Calu3 (cell line): ENCODE measurements at regions of chr11 and their contacts with region 1.

Region 1: DNA sequence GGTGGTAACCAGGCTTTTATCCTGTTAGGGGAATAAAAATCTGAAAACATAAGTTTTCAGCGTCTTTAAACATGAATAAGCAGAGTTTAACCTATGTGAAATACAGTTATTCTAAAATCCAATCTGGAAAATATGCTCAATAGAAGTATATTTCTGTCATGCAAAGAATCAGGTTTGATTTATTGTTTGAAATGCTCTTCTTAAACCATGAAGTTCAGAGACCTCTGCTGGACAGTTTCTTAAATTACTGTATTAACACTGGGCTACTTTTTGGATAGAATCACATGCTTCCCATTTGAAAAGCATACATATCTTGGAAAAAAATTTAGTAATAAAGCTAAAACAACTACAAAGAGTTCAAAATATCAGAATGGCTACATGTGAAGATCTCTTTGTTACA is 25.4 kb downstream of the APIP start:
- DNase-seq: no peak
- H3K4me3 Mint-ChIP-seq: no peak overlapping the region
- H3K27ac Mint-ChIP-seq: no peak overlapping the region
- H3K4me1 Mint-ChIP-seq: peaks cover 20% of the 10 kb centered on the region
- H3K27me3 Mint-ChIP-seq: no peaks in the 10 kb centered on the region
- CTCF ChIP-seq: no peak

Region 2: DNA sequence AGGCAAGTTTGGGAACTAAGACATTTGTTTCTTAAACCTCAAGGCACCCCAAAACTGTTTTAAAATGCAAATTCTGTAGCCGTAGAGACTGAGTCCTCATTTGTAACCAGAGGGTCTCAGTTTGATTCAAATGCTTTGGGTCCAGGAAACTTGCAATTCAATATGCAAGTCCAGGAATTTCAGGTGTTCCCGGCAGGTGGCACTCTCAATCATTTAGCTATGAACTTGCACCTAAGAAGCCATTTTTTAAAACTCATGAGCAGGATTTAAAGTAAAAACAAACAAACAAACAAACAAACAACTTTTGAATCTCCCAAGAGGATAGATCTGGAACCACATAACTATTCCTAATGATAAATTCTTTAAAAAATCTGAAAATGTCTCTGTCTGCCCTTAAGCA is 524.3 kb before region 1 on chr11:
- CTCF ChIA-PET with region 1: no interaction called
- intact Hi-C with region 1: loop called (anchors 10 kb)
- DNase-seq: peak; percentile 62
- H3K4me3 Mint-ChIP-seq: no peak overlapping the region
- H3K27ac Mint-ChIP-seq: no peak overlapping the region
- H3K4me1 Mint-ChIP-seq: peaks cover 8% of the 10 kb centered on the region
- H3K27me3 Mint-ChIP-seq: no peaks in the 10 kb centered on the region
- CTCF ChIP-seq: peak; percentile 46

Region 3: DNA sequence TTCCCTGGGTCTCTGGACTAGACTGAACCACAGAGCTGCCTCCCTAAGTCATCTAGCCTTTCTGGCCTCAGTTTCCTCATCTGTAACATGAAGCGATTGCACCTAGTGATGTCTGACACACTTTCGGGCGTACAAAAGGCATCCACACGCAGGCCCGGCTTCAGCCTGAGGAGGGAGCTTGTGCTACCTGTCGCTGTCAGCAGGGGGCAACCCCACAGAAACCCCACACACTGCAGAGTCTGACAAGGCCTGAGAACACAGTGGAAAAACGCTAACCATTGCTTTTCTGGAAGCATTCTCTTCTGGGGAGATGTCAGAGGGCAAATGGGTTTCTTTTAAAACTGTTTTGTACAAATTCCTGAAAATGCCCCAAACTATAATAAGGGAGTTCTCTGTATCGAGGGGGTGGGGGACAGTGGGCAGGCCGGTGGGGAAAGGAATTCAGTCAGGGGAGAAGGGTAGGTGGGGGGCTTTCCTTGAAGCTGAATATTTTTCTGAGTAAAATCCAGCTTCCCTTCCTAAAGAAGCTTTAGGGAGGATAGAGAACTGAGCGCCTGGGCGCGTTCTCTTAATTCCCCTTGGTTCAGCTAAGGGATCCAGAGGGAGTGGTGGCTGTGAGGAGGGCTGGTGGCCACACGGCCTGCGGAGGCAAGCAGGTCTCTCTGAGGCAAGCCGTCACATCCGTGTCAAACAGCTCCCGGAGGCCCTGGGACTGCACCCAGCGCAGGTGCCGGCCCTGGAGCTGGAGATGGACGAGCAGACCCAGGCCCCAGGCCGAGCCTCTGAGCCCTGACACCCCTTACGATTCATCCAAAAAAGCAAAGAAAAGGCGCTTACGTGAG is 377.8 kb before region 1 on chr11:
- CTCF ChIA-PET with region 1: interaction called, 4 read pairs
- intact Hi-C with region 1: loop called (anchors 2 kb)
- DNase-seq: peak; percentile 79
- H3K4me3 Mint-ChIP-seq: no peak overlapping the region
- H3K27ac Mint-ChIP-seq: no peak overlapping the region
- H3K4me1 Mint-ChIP-seq: peaks cover 23% of the 10 kb centered on the region
- H3K27me3 Mint-ChIP-seq: no peaks in the 10 kb centered on the region
- CTCF ChIP-seq: peak; percentile 81

Region 4: GRCh38 chr11:34667810-34668582 is 222.8 kb before region 1 on chr11:
- CTCF ChIA-PET with region 1: no interaction called
- intact Hi-C with region 1: no loop called
- DNase-seq: no peak
- H3K4me3 Mint-ChIP-seq: no peak overlapping the region
- H3K27ac Mint-ChIP-seq: peak overlapping the region; percentile 32
- H3K4me1 Mint-ChIP-seq: peaks cover 37% of the 10 kb centered on the region
- H3K27me3 Mint-ChIP-seq: no peaks in the 10 kb centered on the region
- CTCF ChIP-seq: no peak

Region 5: GRCh38 chr11:34791780-34792542 is 98.9 kb before region 1 on chr11:
- CTCF ChIA-PET with region 1: interaction called, 9 read pairs
- intact Hi-C with region 1: loop called (anchors 1 kb)
- DNase-seq: no peak
- H3K4me3 Mint-ChIP-seq: no peak overlapping the region
- H3K27ac Mint-ChIP-seq: peak overlapping the region; percentile 66
- H3K4me1 Mint-ChIP-seq: peaks cover 67% of the 10 kb centered on the region
- H3K27me3 Mint-ChIP-seq: no peaks in the 10 kb centered on the region
- CTCF ChIP-seq: peak; percentile 24

Region 6: DNA sequence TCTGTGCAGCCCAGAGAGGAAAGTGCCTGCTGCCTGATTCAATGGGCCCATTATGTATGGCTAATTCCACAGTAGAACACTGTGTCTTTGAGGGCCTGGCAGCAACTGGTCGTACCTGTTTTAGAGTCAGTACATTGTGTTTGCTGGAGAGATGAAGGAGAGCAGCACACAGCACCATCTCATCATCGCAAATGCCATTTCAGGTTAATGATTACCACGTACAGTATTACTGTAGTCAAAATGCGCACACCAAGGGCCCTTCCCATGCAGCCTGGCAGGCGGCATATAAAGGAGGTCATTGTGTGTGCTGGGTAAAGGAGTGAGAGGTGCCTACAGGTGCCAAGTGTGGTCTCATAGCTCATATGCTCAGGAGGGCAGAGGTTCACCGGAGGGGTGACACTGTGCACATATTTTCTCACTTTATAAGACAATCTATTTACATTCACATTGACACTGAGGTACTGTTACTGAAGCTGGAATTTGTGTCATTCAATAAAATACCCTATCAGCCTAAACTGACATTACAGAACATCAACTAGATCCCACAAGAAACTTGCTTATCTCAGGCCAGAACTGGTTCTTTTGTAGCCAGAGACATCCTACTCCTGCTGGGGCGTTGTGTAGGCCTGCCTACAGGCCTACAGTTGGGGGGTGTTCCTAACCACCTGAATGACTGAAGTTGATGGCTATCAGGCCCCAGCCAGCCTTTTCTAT is 65.0 kb before region 1 on chr11:
- CTCF ChIA-PET with region 1: interaction called, 3 read pairs
- intact Hi-C with region 1: loop called (anchors 2 kb)
- DNase-seq: peak; percentile 90
- H3K4me3 Mint-ChIP-seq: peak overlapping the region; percentile 47
- H3K27ac Mint-ChIP-seq: peak overlapping the region; percentile 96
- H3K4me1 Mint-ChIP-seq: peaks cover 68% of the 10 kb centered on the region
- H3K27me3 Mint-ChIP-seq: no peaks in the 10 kb centered on the region
- CTCF ChIP-seq: no peak

Region 7: GRCh38 chr11:35144136-35144741 is 253.4 kb after region 1 on chr11:
- CTCF ChIA-PET with region 1: no interaction called
- intact Hi-C with region 1: no loop called
- DNase-seq: peak; percentile 24
- H3K4me3 Mint-ChIP-seq: peak overlapping the region; percentile 87
- H3K27ac Mint-ChIP-seq: peak overlapping the region; percentile 84
- H3K4me1 Mint-ChIP-seq: peaks cover 60% of the 10 kb centered on the region
- H3K27me3 Mint-ChIP-seq: no peaks in the 10 kb centered on the region
- CTCF ChIP-seq: no peak